Astrocyte of the cerebellum (primary cell): ENCODE measurements at regions of chr2 and their contacts with region 1.

Region 1: DNA sequence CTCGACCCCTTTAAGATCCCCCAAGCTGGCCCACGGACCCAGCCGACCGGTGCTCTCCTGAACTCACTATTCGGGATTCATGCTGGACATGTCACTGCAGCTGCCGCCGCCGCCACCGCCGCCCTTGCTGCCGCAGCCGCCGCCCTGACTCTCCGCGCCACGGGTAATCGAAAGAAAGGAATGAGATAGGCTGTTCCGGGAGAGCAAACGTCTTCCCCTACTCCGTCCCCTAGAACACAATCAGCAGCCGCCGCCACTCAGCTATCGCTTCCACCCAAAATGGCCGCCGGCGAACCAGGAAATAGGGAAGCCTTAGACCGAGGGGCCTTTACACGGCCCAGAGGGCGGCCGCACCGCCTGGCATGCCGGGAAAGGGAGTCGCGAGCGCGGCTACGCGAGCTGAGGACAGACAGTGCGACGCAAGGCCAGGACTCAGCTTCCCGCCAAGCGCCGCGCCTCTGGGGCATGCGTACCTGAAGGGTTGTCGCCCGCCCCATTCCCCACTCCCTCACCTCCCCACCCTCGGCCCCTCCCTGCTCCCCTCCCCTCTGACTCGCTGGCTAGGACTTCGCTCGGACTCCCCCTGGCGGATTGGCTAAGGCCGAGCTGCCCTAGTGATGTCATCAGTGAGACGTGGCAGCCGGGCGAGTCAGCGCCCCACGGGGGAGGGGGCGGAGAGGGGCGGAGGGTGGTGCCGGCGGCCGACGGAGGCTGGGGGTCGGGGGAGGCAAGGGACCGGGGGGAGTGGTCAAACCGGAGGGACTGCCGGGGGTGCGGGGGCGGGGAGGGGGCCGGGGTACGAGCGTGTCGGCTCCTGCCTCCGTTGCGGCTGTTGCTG is at the start of gene RAB1A:
- DNase-seq: peak; percentile 99
- H3K4me3 ChIP-seq: peak within 1 kb of the TSS; percentile 98
- CTCF ChIP-seq: peak; percentile 32

Region 2: GRCh38 chr2:64779117-64779690 is 350.8 kb before region 1 on chr2:
- in situ Hi-C with region 1: no loop called
- DNase-seq: peak; percentile 75
- H3K4me3 ChIP-seq: no peak overlapping the region
- CTCF ChIP-seq: no peak

Region 3: DNA sequence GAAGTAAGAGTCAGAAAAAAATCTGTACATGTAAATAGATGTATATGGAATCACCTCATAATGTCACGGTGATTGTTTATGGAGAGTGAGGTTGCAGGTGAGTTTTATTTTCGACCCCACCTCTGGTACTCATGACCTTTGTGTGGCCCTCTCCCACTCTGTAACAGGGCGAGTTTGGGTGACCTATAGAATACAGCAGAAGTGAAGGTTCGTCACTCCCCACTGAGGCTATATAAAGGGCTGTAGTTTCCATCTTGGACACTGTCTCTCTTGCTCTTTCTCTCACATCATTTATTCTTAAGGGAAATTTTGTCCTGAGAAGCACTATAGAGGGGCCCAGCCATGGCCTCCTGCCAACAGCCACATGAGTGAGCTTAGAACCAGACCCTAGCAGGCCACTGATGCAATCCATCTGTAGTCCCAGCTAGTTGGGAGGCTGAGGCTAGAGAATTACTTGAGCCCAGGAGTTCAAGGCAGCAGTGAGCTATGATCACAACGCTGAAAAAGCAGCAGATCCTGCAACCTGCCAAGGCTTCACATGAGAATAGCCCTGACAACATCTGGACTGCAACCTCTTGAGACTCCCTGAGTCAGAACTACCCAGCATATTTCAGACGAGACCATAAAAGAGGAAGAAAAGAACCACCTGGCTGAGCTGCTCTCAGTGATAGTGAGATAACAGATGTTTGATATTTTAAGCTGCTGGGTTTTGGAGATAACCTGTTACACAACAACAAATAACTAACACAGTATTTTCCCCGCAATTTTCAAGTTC is 215.1 kb before region 1 on chr2:
- in situ Hi-C with region 1: no loop called
- DNase-seq: no peak
- H3K4me3 ChIP-seq: no peak overlapping the region
- CTCF ChIP-seq: no peak

Region 4: GRCh38 chr2:65070172-65070830 is 59.7 kb before region 1 on chr2:
- in situ Hi-C with region 1: loop called (anchors 5 kb)
- DNase-seq: no peak
- H3K4me3 ChIP-seq: no peak overlapping the region
- CTCF ChIP-seq: peak; percentile 37

Region 5: DNA sequence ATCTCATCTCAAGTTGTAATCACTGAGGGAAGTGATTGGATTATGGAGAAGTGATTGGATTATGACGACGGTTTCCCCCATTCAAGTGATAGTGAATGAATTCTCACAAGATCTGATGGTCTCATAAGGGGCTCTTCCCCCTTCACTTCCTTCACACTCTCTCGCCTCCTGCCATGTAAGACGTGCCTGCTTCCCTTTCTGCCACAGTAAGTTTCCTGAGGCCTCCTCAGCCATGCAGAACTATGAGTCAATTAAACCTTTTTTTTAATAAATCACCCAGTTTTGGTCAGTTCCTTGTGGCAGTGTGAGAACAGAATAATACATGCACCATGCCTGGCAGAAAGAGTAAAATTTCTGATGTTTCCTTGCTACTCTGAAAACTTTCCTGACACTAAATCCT is 37.3 kb before region 1 on chr2:
- in situ Hi-C with region 1: no loop called
- DNase-seq: no peak
- H3K4me3 ChIP-seq: no peak overlapping the region
- CTCF ChIP-seq: no peak

Region 6: DNA sequence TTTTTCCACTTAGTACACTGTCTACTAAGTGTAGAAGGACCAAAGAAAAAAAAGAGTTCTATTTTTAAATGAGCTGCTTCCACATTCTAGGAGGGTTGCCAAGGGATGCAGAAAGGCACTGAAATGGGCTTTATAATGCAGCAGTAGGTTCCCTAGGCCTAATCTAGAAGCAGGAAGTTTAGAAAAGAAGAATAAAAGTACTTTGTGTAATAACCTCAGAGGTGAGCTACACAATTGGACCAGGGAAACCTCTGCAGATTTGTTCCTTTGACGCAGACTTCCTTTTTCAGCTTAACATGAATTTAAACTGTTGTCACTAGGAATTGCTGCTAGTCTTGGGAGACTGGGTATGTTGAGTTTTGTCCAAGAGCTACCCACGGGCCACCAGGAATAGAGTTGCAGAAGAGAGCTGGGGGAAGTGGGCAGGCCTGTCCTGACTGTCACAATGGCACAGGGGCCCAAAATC is 34.4 kb after region 1 on chr2:
- in situ Hi-C with region 1: no loop called
- DNase-seq: no peak
- H3K4me3 ChIP-seq: no peak overlapping the region
- CTCF ChIP-seq: no peak